Caco-2 (cell line): ENCODE measurements at regions of chr20 and their contacts with region 1.

Region 1: GRCh38 chr20:57259121-57259937 is 7.1 kb downstream of the BMP7 start:
- DNase-seq: no peak
- H3K4me3 ChIP-seq: no peak overlapping the region
- H3K4me3 Mint-ChIP-seq: no peak overlapping the region
- H3K27ac Mint-ChIP-seq: no peak overlapping the region
- H3K4me1 ChIP-seq: peaks cover 39% of the 10 kb centered on the region
- H3K4me1 Mint-ChIP-seq: peaks cover 69% of the 10 kb centered on the region
- H3K27me3 ChIP-seq: no peaks in the 10 kb centered on the region
- H3K27me3 Mint-ChIP-seq: no peaks in the 10 kb centered on the region
- CTCF ChIP-seq: no peak

Region 2: DNA sequence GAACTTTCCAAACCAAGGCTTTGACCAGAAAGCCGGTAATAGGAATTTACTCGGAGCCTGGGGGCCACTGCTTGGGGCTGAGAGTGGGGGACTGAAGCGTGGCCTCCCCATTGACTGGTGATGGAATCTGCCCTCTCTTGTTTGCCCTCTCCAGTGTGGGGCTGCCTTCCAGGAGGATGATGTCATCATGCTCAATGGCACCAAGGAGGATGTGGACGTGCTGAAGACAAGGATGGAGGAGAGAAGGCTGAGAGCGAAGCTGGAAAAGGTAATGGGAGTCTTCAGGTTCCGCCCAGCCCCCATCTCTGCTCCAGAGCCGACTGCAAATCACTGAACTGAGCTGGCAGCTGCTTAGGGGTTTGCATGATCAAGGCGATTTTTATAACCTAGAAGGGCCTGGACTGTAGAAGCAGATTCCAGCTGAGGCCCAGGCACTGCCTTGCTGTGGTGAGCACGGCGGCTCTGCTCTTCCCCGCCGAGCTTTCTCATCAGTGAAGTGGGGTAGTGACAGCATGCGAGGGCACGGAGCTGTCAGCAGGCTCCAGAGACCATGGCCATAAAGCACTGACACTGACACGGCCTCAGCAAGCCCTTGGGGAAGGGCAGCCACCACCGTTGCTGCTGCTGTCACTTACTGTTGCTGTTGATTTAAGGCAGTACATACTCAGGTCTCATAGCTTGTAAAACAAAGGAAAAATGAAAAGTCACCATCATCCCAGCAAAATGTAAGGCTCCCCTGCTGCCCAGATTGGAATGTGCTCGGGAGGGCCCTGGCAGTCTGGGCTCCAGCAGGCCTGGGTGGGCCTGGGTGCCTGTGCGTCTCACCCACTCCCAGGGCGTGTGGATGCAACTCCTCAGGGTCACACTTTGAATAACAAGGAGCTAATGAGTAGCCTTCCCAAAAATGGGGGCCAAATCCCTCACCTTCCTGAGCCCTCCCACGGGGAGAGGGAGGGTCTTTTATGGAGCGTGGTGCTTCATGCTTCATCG is 745.9 kb before region 1 on chr20:
- CTCF ChIA-PET with region 1: no interaction called
- POLR2A ChIA-PET with region 1: no interaction called
- intact Hi-C with region 1: no loop called
- DNase-seq: no peak
- H3K4me3 ChIP-seq: no peak overlapping the region
- H3K4me3 Mint-ChIP-seq: no peak overlapping the region
- H3K27ac Mint-ChIP-seq: peak overlapping the region; percentile 20
- H3K4me1 ChIP-seq: no peaks in the 10 kb centered on the region
- H3K4me1 Mint-ChIP-seq: no peaks in the 10 kb centered on the region
- H3K27me3 ChIP-seq: no peaks in the 10 kb centered on the region
- H3K27me3 Mint-ChIP-seq: no peaks in the 10 kb centered on the region
- CTCF ChIP-seq: no peak

Region 3: DNA sequence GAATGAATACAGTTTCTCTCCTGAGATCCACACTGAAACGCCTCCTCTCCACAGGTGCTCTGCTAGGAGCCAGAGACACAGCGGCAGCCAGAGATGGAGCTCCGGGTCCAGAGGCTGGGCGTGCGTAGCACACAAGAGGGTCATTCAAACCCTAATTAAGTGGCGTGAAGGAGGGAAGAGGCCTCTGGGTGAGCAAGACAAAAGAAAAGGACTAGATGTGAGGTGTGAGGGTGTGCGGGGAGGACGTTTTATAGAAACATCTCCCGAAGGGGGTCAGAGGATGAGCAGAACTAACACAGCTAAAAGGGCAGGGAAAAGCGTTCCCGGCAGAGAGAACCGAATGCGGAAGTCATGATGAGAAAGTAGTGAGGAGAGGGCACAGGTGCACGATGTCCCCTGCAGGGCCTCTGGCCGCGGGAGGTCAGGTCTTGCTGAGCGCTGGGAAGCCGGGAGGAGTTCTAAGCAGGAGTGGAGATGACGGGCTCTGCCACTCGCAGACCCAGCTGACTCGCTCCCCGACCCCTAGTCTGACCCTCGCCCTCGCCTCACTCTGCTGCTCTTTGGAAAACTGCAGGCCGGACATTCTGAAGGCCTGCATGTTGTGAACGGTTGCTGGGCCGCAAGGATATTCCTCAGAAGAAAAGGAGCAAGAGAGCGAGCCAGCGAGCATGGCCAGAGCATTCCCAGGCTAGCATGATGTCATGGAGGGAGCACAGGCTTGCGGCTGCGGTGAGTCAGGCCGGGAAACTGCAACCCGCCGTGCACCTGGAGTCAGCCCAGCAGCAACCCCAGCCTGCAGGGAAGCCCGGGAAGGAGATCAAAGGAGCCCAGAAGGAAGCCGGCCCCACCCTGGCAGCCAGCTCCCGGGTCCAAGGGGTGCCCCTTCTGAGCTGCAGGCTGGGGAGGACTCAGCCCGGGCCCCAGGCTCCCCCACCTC is 47.1 kb before region 1 on chr20:
- CTCF ChIA-PET with region 1: no interaction called
- POLR2A ChIA-PET with region 1: no interaction called
- intact Hi-C with region 1: no loop called
- DNase-seq: peak in 1 of 2 experiments; percentile 71
- H3K4me3 ChIP-seq: no peak overlapping the region
- H3K4me3 Mint-ChIP-seq: no peak overlapping the region
- H3K27ac Mint-ChIP-seq: peak overlapping the region; percentile 9
- H3K4me1 ChIP-seq: peaks cover 30% of the 10 kb centered on the region
- H3K4me1 Mint-ChIP-seq: peaks cover 13% of the 10 kb centered on the region
- H3K27me3 ChIP-seq: no peaks in the 10 kb centered on the region
- H3K27me3 Mint-ChIP-seq: no peaks in the 10 kb centered on the region
- CTCF ChIP-seq: no peak

Region 4: DNA sequence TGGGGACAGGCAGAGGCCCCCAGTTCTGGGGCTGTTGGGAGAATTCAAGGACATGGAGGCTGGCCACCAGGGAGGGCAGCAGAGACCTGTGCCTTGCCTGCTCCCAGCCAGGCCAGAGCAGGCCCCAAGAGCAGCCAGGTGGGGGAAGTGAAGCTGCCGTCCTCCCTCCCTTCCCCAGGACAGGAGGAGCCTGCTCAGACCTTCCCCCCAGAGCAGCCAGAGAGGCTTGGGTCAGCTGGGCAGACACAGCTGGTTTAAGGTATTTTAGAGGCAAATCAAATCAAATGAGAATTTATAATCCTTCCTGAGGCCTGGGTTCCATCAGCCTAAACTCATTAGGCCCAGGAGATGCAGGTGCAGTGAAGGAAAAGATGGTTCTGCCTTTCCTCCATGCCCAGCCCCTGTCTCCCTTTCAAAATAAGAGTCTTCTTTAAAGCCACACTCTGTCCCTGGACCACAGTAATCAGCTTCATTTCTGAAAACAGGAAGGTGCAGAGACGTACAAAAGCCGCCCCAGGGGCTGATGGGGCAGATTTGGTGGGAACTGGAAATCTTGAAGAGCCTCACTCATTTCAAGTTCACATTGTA is 14.6 kb before region 1 on chr20:
- CTCF ChIA-PET with region 1: interaction called, 15 read pairs
- POLR2A ChIA-PET with region 1: interaction called, 4 read pairs
- intact Hi-C with region 1: loop called (anchors 1 kb)
- DNase-seq: peak; percentile 74 to 80
- H3K4me3 ChIP-seq: no peak overlapping the region
- H3K4me3 Mint-ChIP-seq: no peak overlapping the region
- H3K27ac Mint-ChIP-seq: peak overlapping the region; percentile 53
- H3K4me1 ChIP-seq: peaks cover 20% of the 10 kb centered on the region
- H3K4me1 Mint-ChIP-seq: peaks cover 29% of the 10 kb centered on the region
- H3K27me3 ChIP-seq: no peaks in the 10 kb centered on the region
- H3K27me3 Mint-ChIP-seq: no peaks in the 10 kb centered on the region
- CTCF ChIP-seq: peak; percentile 60 to 83

Region 5: DNA sequence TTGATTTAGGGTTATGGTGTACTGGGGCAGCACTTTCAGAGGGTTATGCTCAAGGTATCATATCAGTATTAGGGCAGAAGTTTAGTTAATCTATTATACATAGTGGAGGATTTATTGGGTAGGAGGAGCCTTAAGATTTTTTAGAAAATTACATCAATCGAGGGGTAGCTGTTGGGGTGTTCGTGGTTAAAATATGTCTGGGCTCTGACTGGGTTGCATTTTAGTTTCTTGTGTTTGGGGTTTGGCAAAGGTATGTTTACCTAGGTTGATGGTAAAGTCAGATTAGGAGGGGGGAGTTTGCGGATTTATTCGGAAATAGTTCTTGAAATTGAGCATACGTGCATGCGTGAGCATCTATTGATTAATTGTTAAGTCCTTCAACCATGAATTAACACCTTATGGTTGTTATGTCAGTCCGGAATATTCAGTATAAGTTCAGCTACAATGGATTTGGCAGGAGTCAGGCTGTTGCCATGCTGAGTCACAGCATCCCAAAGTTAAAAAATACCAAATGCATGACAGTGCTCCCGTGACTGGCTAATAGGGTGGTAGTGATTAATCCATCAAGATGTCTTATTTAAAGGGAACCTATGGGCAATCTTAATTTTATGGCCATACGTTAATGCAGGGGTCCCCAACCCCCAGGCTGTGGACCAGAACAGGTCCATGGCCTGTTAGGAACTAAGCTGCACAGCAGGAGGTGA is 102.0 kb after region 1 on chr20:
- CTCF ChIA-PET with region 1: no interaction called
- POLR2A ChIA-PET with region 1: no interaction called
- intact Hi-C with region 1: no loop called
- DNase-seq: no peak
- H3K4me3 ChIP-seq: no peak overlapping the region
- H3K4me3 Mint-ChIP-seq: no peak overlapping the region
- H3K27ac Mint-ChIP-seq: no peak overlapping the region
- H3K4me1 ChIP-seq: no peaks in the 10 kb centered on the region
- H3K4me1 Mint-ChIP-seq: no peaks in the 10 kb centered on the region
- H3K27me3 ChIP-seq: no peaks in the 10 kb centered on the region
- H3K27me3 Mint-ChIP-seq: no peaks in the 10 kb centered on the region
- CTCF ChIP-seq: no peak